ENCODE measurements at regions of chr21 and their contacts with region 1.

Region 1: GRCh38 chr21:34345091-34345871 is 18.5 kb upstream of the KCNE2 start:
- DNase-seq: no peak
- H3K4me3 Mint-ChIP-seq: no peak overlapping the region
- H3K27ac Mint-ChIP-seq: no peak overlapping the region
- H3K4me1 Mint-ChIP-seq: peaks cover 17% of the 10 kb centered on the region
- H3K27me3 Mint-ChIP-seq: peaks cover 22% of the 10 kb centered on the region

Region 2: GRCh38 chr21:33924079-33924765 is 421.1 kb before region 1 on chr21:
- intact Hi-C with region 1: loop called (anchors 1 kb)
- DNase-seq: peak; percentile 79
- H3K4me3 Mint-ChIP-seq: no peak overlapping the region
- H3K27ac Mint-ChIP-seq: no peak overlapping the region
- H3K4me1 Mint-ChIP-seq: peaks cover 27% of the 10 kb centered on the region
- H3K27me3 Mint-ChIP-seq: peaks cover 3% of the 10 kb centered on the region

Region 3: DNA sequence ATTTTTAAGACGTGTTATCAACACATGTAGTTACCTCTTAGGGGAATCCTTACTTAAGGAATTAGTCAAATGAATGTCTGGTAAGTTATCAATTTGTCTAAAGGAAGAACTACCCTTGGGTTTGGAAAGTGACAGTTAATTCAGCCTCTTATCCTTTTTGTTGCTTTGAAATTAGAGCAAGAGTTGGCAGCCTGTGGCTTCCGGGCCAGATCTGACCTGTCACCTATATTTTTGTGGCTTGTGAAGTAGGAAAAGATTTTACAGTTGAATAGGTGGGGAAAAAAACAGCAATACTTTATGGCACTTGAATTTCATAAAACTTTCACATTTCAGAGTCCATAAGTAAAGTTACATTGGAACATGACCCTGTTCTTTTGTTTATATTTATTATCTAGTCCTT is 266.4 kb before region 1 on chr21:
- intact Hi-C with region 1: loop called (anchors 2 kb)
- DNase-seq: no peak
- H3K4me3 Mint-ChIP-seq: peak overlapping the region; percentile 61
- H3K27ac Mint-ChIP-seq: peak overlapping the region; percentile 70
- H3K4me1 Mint-ChIP-seq: peaks cover 96% of the 10 kb centered on the region
- H3K27me3 Mint-ChIP-seq: no peaks in the 10 kb centered on the region

Region 4: GRCh38 chr21:34202553-34203372 is 142.5 kb before region 1 on chr21:
- intact Hi-C with region 1: loop called (anchors 5 kb)
- DNase-seq: no peak
- H3K4me3 Mint-ChIP-seq: no peak overlapping the region
- H3K27ac Mint-ChIP-seq: peak overlapping the region; percentile 48
- H3K4me1 Mint-ChIP-seq: peaks cover 71% of the 10 kb centered on the region
- H3K27me3 Mint-ChIP-seq: no peaks in the 10 kb centered on the region

Region 5: GRCh38 chr21:34276711-34277425 is 68.4 kb before region 1 on chr21:
- intact Hi-C with region 1: loop called (anchors 5 kb)
- DNase-seq: peak; percentile 20
- H3K4me3 Mint-ChIP-seq: no peak overlapping the region
- H3K27ac Mint-ChIP-seq: peak overlapping the region; percentile 24
- H3K4me1 Mint-ChIP-seq: peaks cover 8% of the 10 kb centered on the region
- H3K27me3 Mint-ChIP-seq: peaks cover 8% of the 10 kb centered on the region

Region 6: GRCh38 chr21:34362136-34362444 is 16.8 kb after region 1 on chr21:
- intact Hi-C with region 1: loop called (anchors 1 kb)
- DNase-seq: no peak
- H3K4me3 Mint-ChIP-seq: no peak overlapping the region
- H3K27ac Mint-ChIP-seq: no peak overlapping the region
- H3K4me1 Mint-ChIP-seq: peaks cover 10% of the 10 kb centered on the region
- H3K27me3 Mint-ChIP-seq: peaks cover 41% of the 10 kb centered on the region

Region 7: GRCh38 chr21:34372321-34372720 is 27.0 kb after region 1 on chr21:
- intact Hi-C with region 1: no loop called
- DNase-seq: no peak
- H3K4me3 Mint-ChIP-seq: no peak overlapping the region
- H3K27ac Mint-ChIP-seq: no peak overlapping the region
- H3K4me1 Mint-ChIP-seq: no peaks in the 10 kb centered on the region
- H3K27me3 Mint-ChIP-seq: peaks cover 5% of the 10 kb centered on the region